ENCODE measurements at regions of chr1 and their contacts with region 1.

Region 1: GRCh38 chr1:27300341-27301051 is 21.5 kb upstream of the TMEM222 start:
- DNase-seq: peak; percentile 52
- H3K4me3 ChIP-seq: no peak overlapping the region
- H3K27me3 ChIP-seq: no peaks in the 10 kb centered on the region
- CTCF ChIP-seq: peak; percentile 97

Region 2: GRCh38 chr1:26913754-26914619 is 386.5 kb before region 1 on chr1 and contains the start of gene NR0B2:
- CTCF ChIA-PET with region 1: no interaction called
- POLR2A ChIA-PET with region 1: no interaction called
- DNase-seq: no peak
- H3K4me3 ChIP-seq: no peak within 1 kb of the TSS
- H3K27me3 ChIP-seq: peaks cover 2% of the 10 kb centered on the region
- CTCF ChIP-seq: no peak
- polyA plus RNA-seq, gene NR0B2: not detected in 2 replicates

Region 3: GRCh38 chr1:26959722-26960615 is 340.5 kb before region 1 on chr1 and contains the start of gene KDF1:
- CTCF ChIA-PET with region 1: no interaction called
- POLR2A ChIA-PET with region 1: no interaction called
- DNase-seq: no peak
- H3K4me3 ChIP-seq: peak within 1 kb of the TSS; percentile 29
- H3K27me3 ChIP-seq: peaks cover 14% of the 10 kb centered on the region
- CTCF ChIP-seq: no peak
- polyA plus RNA-seq, gene KDF1: 0.04 TPM in 1 of 2 replicates, not detected in the other

Region 4: GRCh38 chr1:27097484-27097917 is 203.0 kb before region 1 on chr1:
- CTCF ChIA-PET with region 1: interaction called, 147 read pairs
- POLR2A ChIA-PET with region 1: no interaction called
- DNase-seq: no peak
- H3K4me3 ChIP-seq: no peak overlapping the region
- H3K27me3 ChIP-seq: no peaks in the 10 kb centered on the region
- CTCF ChIP-seq: peak; percentile 96

Region 5: GRCh38 chr1:27314169-27314568 is 13.7 kb after region 1 on chr1:
- CTCF ChIA-PET with region 1: interaction called, 24 read pairs
- POLR2A ChIA-PET with region 1: no interaction called
- DNase-seq: no peak
- H3K4me3 ChIP-seq: no peak overlapping the region
- H3K27me3 ChIP-seq: no peaks in the 10 kb centered on the region
- CTCF ChIP-seq: no peak

Region 6: GRCh38 chr1:27349784-27350662 is 49.5 kb after region 1 on chr1:
- CTCF ChIA-PET with region 1: interaction called, 60 read pairs
- POLR2A ChIA-PET with region 1: interaction called, 5 read pairs
- DNase-seq: peak; percentile 10
- H3K4me3 ChIP-seq: peak overlapping the region; percentile 52
- H3K27me3 ChIP-seq: no peaks in the 10 kb centered on the region
- CTCF ChIP-seq: no peak

Region 7: DNA sequence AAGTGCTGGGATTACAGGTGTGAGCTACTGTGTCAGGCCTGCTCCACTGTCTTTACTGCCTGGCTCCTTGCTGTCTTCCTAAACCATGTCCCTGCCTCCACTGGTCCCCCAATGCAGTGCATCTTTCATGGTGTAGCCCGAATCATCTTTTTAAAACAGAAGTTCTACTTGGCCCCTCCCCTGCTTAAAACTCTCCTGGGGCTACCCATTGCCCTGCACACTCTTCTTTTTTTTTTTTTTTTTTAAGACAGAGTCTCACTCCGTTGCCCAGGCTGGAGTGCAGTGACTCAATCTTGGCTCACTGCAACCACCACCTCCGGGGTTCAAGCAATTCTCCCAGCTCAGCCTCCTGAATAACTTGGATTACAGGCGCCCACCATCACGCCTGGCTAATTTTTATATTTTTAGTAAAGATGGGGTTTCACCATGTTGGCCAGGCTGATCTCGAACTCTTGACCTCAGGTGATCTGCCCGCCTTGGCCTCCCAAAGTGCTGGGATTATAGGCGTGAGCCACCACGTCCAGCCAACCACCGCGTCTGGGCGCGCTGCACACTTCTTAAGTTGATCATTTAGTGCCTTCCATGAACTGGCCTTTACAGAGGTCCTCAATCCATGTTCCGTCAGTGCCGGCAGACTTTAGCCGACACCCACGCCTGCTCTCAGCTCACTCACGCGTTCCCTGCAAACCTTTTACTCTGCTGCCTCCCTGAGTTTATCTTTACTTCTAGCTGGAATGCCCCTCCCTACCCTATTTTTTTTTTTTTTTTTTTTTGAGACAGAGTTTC is 71.7 kb after region 1 on chr1:
- CTCF ChIA-PET with region 1: interaction called, 118 read pairs
- POLR2A ChIA-PET with region 1: interaction called, 5 read pairs
- DNase-seq: no peak
- H3K4me3 ChIP-seq: no peak overlapping the region
- H3K27me3 ChIP-seq: no peaks in the 10 kb centered on the region; the same call in 1 of the 2 replicates
- CTCF ChIP-seq: no peak

Region 8: GRCh38 chr1:27662707-27663393 is 362.4 kb after region 1 on chr1:
- CTCF ChIA-PET with region 1: interaction called, 18 read pairs
- POLR2A ChIA-PET with region 1: interaction called, 26 read pairs
- DNase-seq: no peak
- H3K4me3 ChIP-seq: no peak overlapping the region
- H3K27me3 ChIP-seq: no peaks in the 10 kb centered on the region
- CTCF ChIP-seq: peak; percentile 86

Measured in BJ (cell line).